ENCODE measurements at regions of chr11 and their contacts with region 1.

Region 1: GRCh38 chr11:111531687-111532364 is 8.7 kb upstream of the LAYN start:
- DNase-seq: peak; percentile 52
- H3K4me3 Mint-ChIP-seq: no peak overlapping the region
- H3K27ac Mint-ChIP-seq: peak overlapping the region; percentile 56
- H3K4me1 Mint-ChIP-seq: peaks cover 31% of the 10 kb centered on the region
- H3K27me3 Mint-ChIP-seq: peaks cover 14% of the 10 kb centered on the region

Region 2: DNA sequence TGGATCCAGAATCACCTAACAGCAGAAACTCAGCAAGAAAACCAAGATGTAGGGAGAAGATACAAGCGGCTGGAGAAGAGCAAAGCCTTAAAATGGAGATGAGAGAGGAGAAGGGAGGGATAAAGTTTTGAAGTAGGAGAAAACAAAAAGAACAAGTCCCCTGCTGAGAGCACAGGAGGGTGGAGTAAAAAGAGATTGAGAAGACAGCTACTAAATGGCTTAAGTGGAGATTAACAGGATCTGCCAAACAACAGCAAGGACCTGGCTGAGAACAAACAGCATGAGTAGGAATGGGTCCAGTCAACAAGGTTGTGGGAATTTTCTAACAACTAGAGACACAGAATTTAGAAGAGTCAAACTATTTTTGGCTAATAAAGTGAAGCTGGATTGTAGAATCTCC is 37.8 kb before region 1 on chr11:
- intact Hi-C with region 1: no loop called
- DNase-seq: no peak
- H3K4me3 Mint-ChIP-seq: no peak overlapping the region
- H3K27ac Mint-ChIP-seq: no peak overlapping the region
- H3K4me1 Mint-ChIP-seq: no peaks in the 10 kb centered on the region
- H3K27me3 Mint-ChIP-seq: peaks cover 32% of the 10 kb centered on the region

Region 3: DNA sequence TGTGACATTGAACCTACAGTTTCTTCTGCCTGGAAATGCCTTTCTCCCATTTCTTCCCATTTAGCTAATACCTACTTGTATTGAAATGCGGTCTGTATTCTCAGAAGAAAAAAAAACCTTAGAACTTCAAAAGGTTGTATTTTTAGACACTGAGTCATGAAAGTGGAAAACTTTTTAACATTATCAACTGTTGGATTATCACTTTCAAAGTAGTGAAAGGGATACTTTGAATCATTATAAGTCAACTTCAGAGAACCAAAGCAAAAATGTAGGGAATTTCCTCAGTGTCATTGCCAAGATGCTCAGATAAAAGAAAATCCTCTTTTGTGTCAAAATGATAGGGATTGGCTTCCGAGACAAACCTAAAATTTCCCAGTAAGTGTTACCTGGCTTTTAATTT is 10.7 kb before region 1 on chr11:
- intact Hi-C with region 1: loop called (anchors 1 kb)
- DNase-seq: no peak
- H3K4me3 Mint-ChIP-seq: no peak overlapping the region
- H3K27ac Mint-ChIP-seq: peak overlapping the region; percentile 32
- H3K4me1 Mint-ChIP-seq: peaks cover 30% of the 10 kb centered on the region
- H3K27me3 Mint-ChIP-seq: peaks cover 1% of the 10 kb centered on the region

Region 4: DNA sequence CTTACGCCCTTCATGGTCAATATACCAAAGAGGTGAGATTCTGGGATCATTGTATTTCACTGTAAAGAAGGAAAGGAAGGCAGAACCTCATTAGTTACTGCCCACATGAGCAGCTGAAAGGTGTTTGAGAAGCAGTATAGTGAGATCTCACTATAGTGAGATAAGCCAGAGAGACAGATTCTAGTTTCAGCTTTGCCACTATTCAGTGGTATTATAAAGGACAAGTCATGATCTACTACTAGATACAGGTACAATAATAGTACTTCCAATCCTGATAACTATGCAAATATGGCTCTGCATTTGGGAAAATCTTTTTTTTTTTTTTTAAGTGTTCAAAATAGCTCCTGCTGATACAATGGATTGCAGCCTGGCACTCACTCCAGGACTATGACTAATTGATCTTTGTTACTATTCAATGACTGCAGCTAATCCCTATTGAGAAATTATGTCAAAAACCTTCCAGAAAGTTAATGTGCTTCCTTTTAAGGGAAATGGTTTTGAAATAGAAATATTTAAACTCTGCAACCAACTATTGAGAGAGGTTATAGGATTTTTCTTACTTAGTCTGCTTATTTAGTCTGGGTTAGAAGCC is 485.0 kb after region 1 on chr11:
- intact Hi-C with region 1: no loop called
- DNase-seq: no peak
- H3K4me3 Mint-ChIP-seq: no peak overlapping the region
- H3K27ac Mint-ChIP-seq: no peak overlapping the region
- H3K4me1 Mint-ChIP-seq: no peaks in the 10 kb centered on the region
- H3K27me3 Mint-ChIP-seq: no peaks in the 10 kb centered on the region